AG04450 (cell line): ENCODE measurements at regions of chr1 and their contacts with region 1.

Region 1: GRCh38 chr1:115764541-115764940 is 4.0 kb downstream of the CASQ2 start:
- DNase-seq: no peak
- H3K4me3 ChIP-seq: no peak overlapping the region
- H3K27ac ChIP-seq: no peak overlapping the region
- H3K27me3 ChIP-seq: peaks cover 10% of the 10 kb centered on the region
- CTCF ChIP-seq: peak; percentile 52

Region 2: GRCh38 chr1:115609021-115609420 is 155.5 kb before region 1 on chr1:
- CTCF ChIA-PET with region 1: interaction called, 52 read pairs
- POLR2A ChIA-PET with region 1: no interaction called
- DNase-seq: no peak
- H3K4me3 ChIP-seq: no peak overlapping the region
- H3K27ac ChIP-seq: no peak overlapping the region
- H3K27me3 ChIP-seq: peaks cover 16% of the 10 kb centered on the region
- CTCF ChIP-seq: no peak

Region 3: GRCh38 chr1:115717541-115717940 is 47.0 kb before region 1 on chr1:
- CTCF ChIA-PET with region 1: interaction called, 81 read pairs
- POLR2A ChIA-PET with region 1: no interaction called
- DNase-seq: no peak
- H3K4me3 ChIP-seq: no peak overlapping the region
- H3K27ac ChIP-seq: no peak overlapping the region
- H3K27me3 ChIP-seq: peaks cover 5% of the 10 kb centered on the region
- CTCF ChIP-seq: peak; percentile 53

Region 4: DNA sequence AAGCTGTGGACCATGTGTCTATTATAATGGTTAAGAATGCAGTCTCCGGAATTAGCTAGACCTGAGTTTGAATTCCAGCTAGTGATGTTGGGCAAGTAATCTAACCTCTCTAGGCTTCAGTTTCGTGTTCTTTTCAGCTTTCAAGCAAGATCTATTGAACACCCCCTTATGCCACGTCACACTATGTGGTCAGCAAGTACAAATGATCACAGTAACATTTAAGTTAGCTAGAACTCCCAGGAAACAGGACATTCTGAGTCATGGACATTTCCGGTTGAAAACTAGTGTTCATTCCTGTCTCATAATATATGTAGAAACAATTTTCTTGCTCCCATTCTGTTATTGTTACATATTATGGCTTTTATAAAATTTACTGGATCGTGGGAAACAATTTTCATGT is 110.4 kb after region 1 on chr1:
- CTCF ChIA-PET with region 1: no interaction called
- POLR2A ChIA-PET with region 1: no interaction called
- DNase-seq: no peak
- H3K4me3 ChIP-seq: no peak overlapping the region
- H3K27ac ChIP-seq: no peak overlapping the region
- H3K27me3 ChIP-seq: peaks cover 3% of the 10 kb centered on the region
- CTCF ChIP-seq: no peak